GM10248 (cell line): ENCODE measurements at regions of chr7 and their contacts with region 1.

Region 1: GRCh38 chr7:155598810-155599210 is 45.7 kb upstream of the RBM33 start:
- DNase-seq: peak; percentile 79
- CTCF ChIP-seq: peak; percentile 98

Region 2: GRCh38 chr7:155610633-155611193 is 11.9 kb after region 1 on chr7:
- CTCF ChIA-PET with region 1: interaction called, 33 read pairs
- POLR2A ChIA-PET with region 1: interaction called, 3 read pairs
- DNase-seq: no peak
- CTCF ChIP-seq: no peak

Region 3: DNA sequence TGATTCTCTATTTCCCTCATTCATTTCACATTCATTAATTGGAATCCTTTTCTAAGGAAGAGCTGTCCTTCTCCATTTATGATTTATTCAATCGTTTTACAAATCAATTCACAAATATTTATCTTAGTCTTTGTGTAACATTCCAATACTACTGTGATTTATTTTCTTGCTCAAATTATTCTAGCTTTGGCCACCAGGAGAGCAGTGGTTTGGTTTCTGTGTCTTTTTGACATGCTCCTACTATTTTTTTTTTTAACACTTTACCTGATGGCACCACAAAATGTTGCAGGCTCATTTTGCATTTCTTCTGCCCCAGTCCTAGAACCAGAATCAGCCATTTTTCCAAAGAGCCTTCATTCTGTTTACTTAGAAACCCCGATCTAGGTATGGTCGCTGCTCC is 32.3 kb after region 1 on chr7:
- CTCF ChIA-PET with region 1: interaction called, 10 read pairs
- POLR2A ChIA-PET with region 1: no interaction called
- DNase-seq: no peak
- CTCF ChIP-seq: no peak

Region 4: GRCh38 chr7:155674556-155674955 is 75.7 kb after region 1 on chr7:
- CTCF ChIA-PET with region 1: no interaction called
- POLR2A ChIA-PET with region 1: no interaction called
- DNase-seq: no peak
- CTCF ChIP-seq: no peak

Region 5: DNA sequence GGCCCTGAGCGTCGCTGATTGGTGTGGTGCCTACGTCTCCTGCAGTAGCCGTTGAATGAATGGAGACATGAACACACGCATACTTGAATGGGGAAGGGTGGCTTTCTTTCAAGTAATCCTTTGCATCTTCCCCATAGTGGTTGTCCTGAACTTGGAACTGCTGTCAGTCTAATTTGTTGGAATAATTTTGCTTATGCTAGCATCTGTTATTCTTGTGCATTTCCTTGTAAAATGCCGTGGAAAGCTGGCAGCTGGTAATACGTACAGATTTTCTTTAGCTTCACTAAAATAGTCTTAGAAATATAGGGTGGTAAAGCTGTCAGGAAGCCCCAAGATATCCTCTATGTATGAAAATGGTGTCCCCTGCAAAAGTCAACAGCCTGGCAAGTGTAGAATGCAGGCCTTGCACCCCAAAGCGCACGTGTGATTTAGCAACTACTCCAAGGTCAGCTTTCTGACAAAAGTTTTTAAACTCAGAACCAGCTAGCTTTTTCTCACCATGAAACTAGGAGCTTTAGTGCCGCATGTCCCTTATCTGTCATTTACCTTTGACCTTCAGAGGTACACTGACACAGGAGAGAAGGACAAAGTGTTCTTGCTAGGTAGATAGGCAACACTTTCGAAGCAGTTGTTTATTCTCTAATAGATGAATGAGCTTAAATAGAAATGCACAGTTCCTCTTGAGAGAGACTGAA is 116.4 kb after region 1 on chr7:
- CTCF ChIA-PET with region 1: interaction called, 14 read pairs
- POLR2A ChIA-PET with region 1: no interaction called
- DNase-seq: no peak
- CTCF ChIP-seq: no peak

Region 6: GRCh38 chr7:155728116-155728515 is 129.3 kb after region 1 on chr7:
- CTCF ChIA-PET with region 1: interaction called, 170 read pairs
- POLR2A ChIA-PET with region 1: no interaction called
- DNase-seq: no peak
- CTCF ChIP-seq: no peak

Region 7: GRCh38 chr7:155752756-155753445 is 154.1 kb after region 1 on chr7:
- CTCF ChIA-PET with region 1: interaction called, 13 read pairs
- POLR2A ChIA-PET with region 1: no interaction called
- DNase-seq: peak; percentile 57
- CTCF ChIP-seq: no peak

Region 8: GRCh38 chr7:155769701-155770100 is 170.9 kb after region 1 on chr7:
- CTCF ChIA-PET with region 1: interaction called, 155 read pairs
- POLR2A ChIA-PET with region 1: no interaction called
- DNase-seq: no peak
- CTCF ChIP-seq: no peak